ENCODE measurements at regions of chr1 and their contacts with region 1.

Region 1: GRCh38 chr1:155017041-155017945 is 14.7 kb downstream of the ZBTB7B start:
- DNase-seq: peak; percentile 93
- ATAC-seq: peak; percentile 75
- H3K4me3 ChIP-seq: peak overlapping the region; percentile 9 to 68 (median 49)
- H3K4me3 Mint-ChIP-seq: peak overlapping the region; percentile 84
- H3K27ac ChIP-seq: peak overlapping the region; percentile 88 to 89
- H3K27ac Mint-ChIP-seq: peak overlapping the region; percentile 93
- H3K4me1 ChIP-seq: peaks cover 53 to 67% of the 10 kb centered on the region in 2 donors
- H3K4me1 Mint-ChIP-seq: peaks cover 69% of the 10 kb centered on the region
- H3K27me3 ChIP-seq: no peaks in the 10 kb centered on the region
- H3K27me3 Mint-ChIP-seq: no peaks in the 10 kb centered on the region
- CTCF ChIP-seq: peak; percentile 99

Region 2: GRCh38 chr1:154961497-154962262 is 55.6 kb before region 1 on chr1 and contains the start of gene PYGO2:
- CTCF ChIA-PET with region 1: interaction called, 61 read pairs
- POLR2A ChIA-PET with region 1: interaction called, 7 read pairs
- intact Hi-C with region 1: loop called (anchors 1 kb)
- DNase-seq: peak; percentile 93
- ATAC-seq: peak; percentile 86
- H3K4me3 ChIP-seq: peak within 1 kb of the TSS; percentile 62 to 91 (median 81)
- H3K4me3 Mint-ChIP-seq: peak within 1 kb of the TSS; percentile 91
- H3K27ac ChIP-seq: peak within 1 kb of the TSS; percentile 76 to 96
- H3K27ac Mint-ChIP-seq: peak within 1 kb of the TSS; percentile 94
- H3K4me1 ChIP-seq: peaks cover 22 to 35% of the 10 kb centered on the region in 2 donors
- H3K4me1 Mint-ChIP-seq: peaks cover 28% of the 10 kb centered on the region
- H3K27me3 ChIP-seq: no peaks in the 10 kb centered on the region
- H3K27me3 Mint-ChIP-seq: no peaks in the 10 kb centered on the region
- CTCF ChIP-seq: peak; percentile 82
- total RNA-seq, gene PYGO2: 47.5 and 52.7 TPM in 2 replicates

Region 3: DNA sequence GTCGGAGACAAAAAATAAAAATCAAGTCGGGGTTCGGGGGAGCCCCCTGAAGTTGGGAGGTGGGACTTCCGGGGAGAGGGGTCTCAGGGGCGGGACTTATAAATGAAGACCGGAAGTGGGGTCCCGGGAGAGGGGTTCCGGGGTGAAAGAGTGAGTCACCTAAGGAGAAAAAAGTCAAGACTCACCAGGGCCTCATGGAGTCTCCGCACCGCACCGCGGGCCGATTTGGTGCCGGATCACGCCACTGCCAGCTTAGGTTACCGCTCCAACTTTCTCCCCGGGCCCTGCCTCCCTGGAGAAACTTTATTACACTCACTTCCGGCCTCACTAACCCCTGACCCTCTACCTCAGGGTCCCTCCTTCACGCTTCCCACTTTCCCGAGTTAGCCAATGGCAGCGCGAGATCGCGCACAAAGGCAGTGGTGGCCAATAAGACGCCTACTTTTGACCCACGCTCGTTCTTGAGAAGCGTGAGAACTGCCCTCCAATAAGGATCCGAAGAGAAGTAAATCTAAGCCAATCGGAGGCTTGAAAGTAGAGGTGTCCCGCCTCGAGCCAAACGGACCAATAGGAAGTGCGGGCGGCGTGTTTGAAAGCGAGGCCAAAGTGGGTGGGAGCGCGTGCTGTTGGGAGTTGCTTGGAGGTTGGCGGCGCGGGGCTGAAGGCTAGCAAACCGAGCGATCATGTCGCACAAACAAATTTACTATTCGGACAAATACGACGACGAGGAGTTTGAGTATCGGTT is 43.1 kb before region 1 on chr1 and contains the start of gene CKS1B:
- CTCF ChIA-PET with region 1: interaction called, 110 read pairs
- POLR2A ChIA-PET with region 1: interaction called, 32 read pairs
- intact Hi-C with region 1: loop called (anchors 1 kb)
- DNase-seq: peak; percentile 100
- ATAC-seq: peak; percentile 80
- H3K4me3 ChIP-seq: peak within 1 kb of the TSS; percentile 71 to 99 (median 90)
- H3K4me3 Mint-ChIP-seq: no peak within 1 kb of the TSS
- H3K27ac ChIP-seq: peak within 1 kb of the TSS; percentile 90 to 94
- H3K27ac Mint-ChIP-seq: no peak within 1 kb of the TSS
- H3K4me1 ChIP-seq: peaks cover 22 to 44% of the 10 kb centered on the region in 2 donors
- H3K4me1 Mint-ChIP-seq: peaks cover 29% of the 10 kb centered on the region
- H3K27me3 ChIP-seq: no peaks in the 10 kb centered on the region
- H3K27me3 Mint-ChIP-seq: no peaks in the 10 kb centered on the region
- CTCF ChIP-seq: no peak
- total RNA-seq, gene CKS1B: 16.8 and 17.5 TPM in 2 replicates

Region 4: GRCh38 chr1:155044812-155045690 is 27.8 kb after region 1 on chr1:
- CTCF ChIA-PET with region 1: interaction called, 12 read pairs
- POLR2A ChIA-PET with region 1: no interaction called
- intact Hi-C with region 1: no loop called
- DNase-seq: peak; percentile 76
- ATAC-seq: peak; percentile 92
- H3K4me3 ChIP-seq: no peak overlapping the region
- H3K4me3 Mint-ChIP-seq: peak overlapping the region; percentile 30
- H3K27ac ChIP-seq: no peak overlapping the region
- H3K27ac Mint-ChIP-seq: peak overlapping the region; percentile 54
- H3K4me1 ChIP-seq: peaks cover 0 to under 1% of the 10 kb centered on the region in 2 donors
- H3K4me1 Mint-ChIP-seq: peaks cover 10% of the 10 kb centered on the region
- H3K27me3 ChIP-seq: no peaks in the 10 kb centered on the region
- H3K27me3 Mint-ChIP-seq: peaks cover 3% of the 10 kb centered on the region
- CTCF ChIP-seq: peak; percentile 63

Region 5: DNA sequence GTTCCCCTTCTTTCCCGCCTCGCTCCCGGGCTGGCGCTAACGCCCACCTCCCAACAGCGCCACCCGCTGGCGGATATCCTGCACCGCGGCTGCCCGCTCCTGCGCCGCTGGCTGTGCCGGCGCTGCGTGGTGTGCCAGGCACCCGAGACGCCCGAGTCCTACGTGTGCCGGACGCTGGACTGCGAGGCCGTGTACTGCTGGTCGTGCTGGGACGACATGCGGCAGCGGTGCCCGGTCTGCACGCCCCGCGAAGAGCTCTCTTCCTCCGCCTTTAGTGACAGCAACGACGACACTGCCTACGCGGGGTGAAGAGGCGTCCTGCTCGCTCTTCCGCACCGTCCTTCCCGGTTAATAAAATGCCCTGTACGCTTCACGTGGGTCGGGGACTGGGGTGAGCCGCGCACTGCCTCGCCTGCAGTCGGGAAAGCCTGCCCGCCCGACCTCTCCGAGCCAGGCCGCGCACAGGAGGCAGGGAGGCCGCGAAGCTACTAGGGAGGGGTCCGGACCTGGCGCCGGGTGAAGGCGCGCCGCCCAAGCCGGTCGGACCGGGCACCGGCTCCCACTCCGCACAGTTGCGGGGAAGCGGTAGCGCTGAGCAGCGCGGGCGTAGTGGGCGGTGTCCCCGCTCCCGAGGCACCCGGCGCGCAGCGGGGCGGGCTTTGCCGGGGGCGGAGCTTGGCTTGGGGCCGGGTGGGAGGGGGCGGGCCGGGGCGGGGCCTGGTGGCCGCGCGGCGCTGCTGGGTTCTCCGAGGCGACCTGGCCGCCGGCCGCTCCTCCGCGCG is 33.5 kb after region 1 on chr1 and contains the start of gene ADAM15:
- CTCF ChIA-PET with region 1: interaction called, 14 read pairs
- POLR2A ChIA-PET with region 1: interaction called, 4 read pairs
- intact Hi-C with region 1: loop called (anchors 1 kb)
- DNase-seq: peak; percentile 83
- ATAC-seq: peak; percentile 84
- H3K4me3 ChIP-seq: peak within 1 kb of the TSS; percentile 44 to 82 (median 76)
- H3K4me3 Mint-ChIP-seq: peak within 1 kb of the TSS; percentile 92
- H3K27ac ChIP-seq: peak within 1 kb of the TSS in 1 of 2 donors; percentile 18
- H3K27ac Mint-ChIP-seq: peak within 1 kb of the TSS; percentile 77
- H3K4me1 ChIP-seq: peaks cover 20 to 30% of the 10 kb centered on the region in 2 donors
- H3K4me1 Mint-ChIP-seq: peaks cover 25% of the 10 kb centered on the region
- H3K27me3 ChIP-seq: no peaks in the 10 kb centered on the region
- H3K27me3 Mint-ChIP-seq: no peaks in the 10 kb centered on the region
- CTCF ChIP-seq: peak; percentile 95
- total RNA-seq, gene ADAM15: 14.6 and 17.0 TPM in 2 replicates